ENCODE measurements at regions of chr1 and their contacts with region 1.

Region 1: DNA sequence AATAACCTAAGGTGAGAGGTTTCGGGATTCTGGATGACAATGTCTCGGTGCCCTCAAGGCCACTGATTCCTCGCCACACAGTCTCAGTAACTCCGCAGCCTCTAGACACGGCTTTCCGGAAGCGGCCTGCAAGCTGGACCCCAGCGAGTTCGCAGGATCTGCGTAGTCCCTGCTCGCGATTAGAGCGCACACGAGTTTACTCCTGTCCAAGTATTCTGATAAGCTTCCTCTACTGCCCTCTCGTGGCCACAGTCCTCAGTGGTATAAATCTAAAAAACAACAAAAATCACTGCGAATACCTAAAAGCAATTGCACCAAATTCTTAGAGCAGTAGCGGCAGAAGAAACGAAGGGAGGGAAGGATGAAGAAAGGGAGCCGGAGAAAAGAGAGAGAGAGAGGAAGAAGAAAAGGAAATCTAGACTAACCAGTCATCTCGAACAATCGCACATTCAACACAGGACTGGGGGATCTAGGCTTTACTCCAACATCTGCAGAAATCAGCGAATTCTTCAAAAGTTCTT is 1.1 kb upstream of the PLXNA2 start:
- DNase-seq: peak; percentile 58 to 82 (median 62)
- H3K4me3 ChIP-seq: peak overlapping the region; percentile 60
- H3K4me3 Mint-ChIP-seq: peak overlapping the region; percentile 79 to 91 (median 88)
- H3K27ac ChIP-seq: peak overlapping the region; percentile 29
- H3K27ac Mint-ChIP-seq: peak overlapping the region; percentile 34 to 88 (median 79)
- H3K4me1 ChIP-seq: peaks cover 10% of the 10 kb centered on the region
- H3K4me1 Mint-ChIP-seq: peaks cover 15 to 18% (median 18%) of the 10 kb centered on the region in 3 donors
- H3K27me3 ChIP-seq: peaks cover 10% of the 10 kb centered on the region
- H3K27me3 Mint-ChIP-seq: peaks cover 10 to 12% of the 10 kb centered on the region in 2 donors

Region 2: DNA sequence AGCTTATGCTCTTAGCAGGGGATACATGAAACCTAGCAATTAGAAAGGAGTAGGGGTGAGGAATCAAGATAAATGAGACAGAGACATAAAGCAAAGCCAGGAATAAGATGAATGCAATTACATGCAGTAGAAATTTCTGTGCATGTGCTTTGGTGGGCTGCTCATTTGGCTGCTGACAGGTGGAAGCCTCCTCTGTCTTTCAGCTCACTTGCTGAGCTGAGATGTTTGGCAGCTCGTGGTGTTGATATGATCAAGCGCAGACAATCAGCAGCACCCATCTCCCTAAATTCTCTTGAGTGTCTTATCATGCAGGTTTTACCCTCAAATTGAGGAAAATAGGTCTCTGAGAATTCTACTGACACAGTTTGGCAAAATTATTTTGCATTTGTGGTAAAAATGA is 226.0 kb before region 1 on chr1:
- CTCF ChIA-PET with region 1: interaction called, 63 read pairs
- POLR2A ChIA-PET with region 1: interaction called, 19 read pairs
- DNase-seq: no peak
- H3K4me3 ChIP-seq: no peak overlapping the region
- H3K4me3 Mint-ChIP-seq: no peak overlapping the region
- H3K27ac ChIP-seq: no peak overlapping the region
- H3K27ac Mint-ChIP-seq: no peak overlapping the region
- H3K4me1 ChIP-seq: no peaks in the 10 kb centered on the region
- H3K4me1 Mint-ChIP-seq: no peaks in the 10 kb centered on the region
- H3K27me3 ChIP-seq: no peaks in the 10 kb centered on the region
- H3K27me3 Mint-ChIP-seq: peaks cover 9 to 24% of the 10 kb centered on the region in 2 donors

Region 3: GRCh38 chr1:208029381-208030287 is 215.6 kb before region 1 on chr1:
- CTCF ChIA-PET with region 1: interaction called, 15 read pairs
- POLR2A ChIA-PET with region 1: no interaction called
- DNase-seq: no peak
- H3K4me3 ChIP-seq: no peak overlapping the region
- H3K4me3 Mint-ChIP-seq: no peak overlapping the region
- H3K27ac ChIP-seq: no peak overlapping the region
- H3K27ac Mint-ChIP-seq: peak overlapping the region in 1 of 8 donors; percentile 34
- H3K4me1 ChIP-seq: no peaks in the 10 kb centered on the region
- H3K4me1 Mint-ChIP-seq: no peaks in the 10 kb centered on the region
- H3K27me3 ChIP-seq: peaks cover 4% of the 10 kb centered on the region
- H3K27me3 Mint-ChIP-seq: peaks cover 16 to 19% of the 10 kb centered on the region in 2 donors

Region 4: GRCh38 chr1:208065862-208066261 is 179.4 kb before region 1 on chr1:
- CTCF ChIA-PET with region 1: no interaction called
- POLR2A ChIA-PET with region 1: no interaction called
- DNase-seq: no peak
- H3K4me3 ChIP-seq: no peak overlapping the region
- H3K4me3 Mint-ChIP-seq: no peak overlapping the region
- H3K27ac ChIP-seq: no peak overlapping the region
- H3K27ac Mint-ChIP-seq: no peak overlapping the region
- H3K4me1 ChIP-seq: no peaks in the 10 kb centered on the region
- H3K4me1 Mint-ChIP-seq: no peaks in the 10 kb centered on the region
- H3K27me3 ChIP-seq: no peaks in the 10 kb centered on the region
- H3K27me3 Mint-ChIP-seq: peaks cover 1 to 2% of the 10 kb centered on the region in 2 donors

Region 5: DNA sequence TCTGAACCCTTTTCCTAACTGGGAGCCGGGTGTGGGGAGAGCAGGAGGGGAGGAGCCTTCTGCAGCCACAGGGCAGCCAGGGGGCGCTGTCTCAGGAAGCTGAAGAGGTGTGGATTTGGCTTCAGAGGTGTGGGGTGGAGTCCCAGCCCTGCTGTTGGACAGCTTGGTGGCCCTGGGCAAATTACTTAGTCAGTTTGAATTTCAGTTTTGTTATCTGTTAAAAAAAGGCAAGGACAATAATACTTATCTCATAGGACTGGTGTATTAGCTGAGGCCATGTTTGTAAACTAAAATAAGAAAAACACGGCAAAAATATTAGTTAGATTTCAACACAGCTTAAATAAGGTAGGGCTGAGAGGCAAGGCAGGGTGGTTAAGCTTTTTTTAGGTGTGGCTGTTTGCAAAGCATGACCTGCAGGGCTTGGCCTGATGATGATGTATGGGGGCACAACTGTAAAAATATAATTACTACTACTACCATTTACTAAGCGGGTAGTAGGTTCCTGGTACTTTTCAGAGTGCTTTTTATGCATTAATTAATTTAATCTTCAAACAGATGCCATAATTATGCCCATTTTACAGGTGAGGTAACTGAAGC is 112.9 kb before region 1 on chr1:
- CTCF ChIA-PET with region 1: interaction called, 38 read pairs
- POLR2A ChIA-PET with region 1: interaction called, 3 read pairs
- DNase-seq: peak; percentile 6 to 62 (median 13)
- H3K4me3 ChIP-seq: no peak overlapping the region
- H3K4me3 Mint-ChIP-seq: peak overlapping the region in 1 of 7 donors; percentile 30
- H3K27ac ChIP-seq: no peak overlapping the region
- H3K27ac Mint-ChIP-seq: no peak overlapping the region
- H3K4me1 ChIP-seq: no peaks in the 10 kb centered on the region
- H3K4me1 Mint-ChIP-seq: peaks cover 4 to 9% (median 8%) of the 10 kb centered on the region in 3 donors
- H3K27me3 ChIP-seq: peaks cover 6% of the 10 kb centered on the region
- H3K27me3 Mint-ChIP-seq: peaks cover 16 to 20% of the 10 kb centered on the region in 2 donors

Region 6: GRCh38 chr1:208177656-208178055 is 67.6 kb before region 1 on chr1:
- CTCF ChIA-PET with region 1: no interaction called
- POLR2A ChIA-PET with region 1: no interaction called
- DNase-seq: no peak
- H3K4me3 ChIP-seq: no peak overlapping the region
- H3K4me3 Mint-ChIP-seq: no peak overlapping the region
- H3K27ac ChIP-seq: no peak overlapping the region
- H3K27ac Mint-ChIP-seq: no peak overlapping the region
- H3K4me1 ChIP-seq: no peaks in the 10 kb centered on the region
- H3K4me1 Mint-ChIP-seq: no peaks in the 10 kb centered on the region
- H3K27me3 ChIP-seq: no peaks in the 10 kb centered on the region
- H3K27me3 Mint-ChIP-seq: peaks cover 11 to 20% of the 10 kb centered on the region in 2 donors

Measured in CD8-positive, alpha-beta memory T cell (primary cell).